PC-3 (cell line): ENCODE measurements at regions of chr17 and their contacts with region 1.

Region 1: GRCh38 chr17:64129764-64130558 is at the start of gene ERN1:
- DNase-seq: peak; percentile 91
- ATAC-seq: peak; percentile 88
- H3K4me3 ChIP-seq: peak within 1 kb of the TSS; percentile 92
- H3K27ac ChIP-seq: peak within 1 kb of the TSS; percentile 47
- H3K4me1 ChIP-seq: peaks cover 24% of the 10 kb centered on the region
- H3K27me3 ChIP-seq: no peaks in the 10 kb centered on the region
- CTCF ChIP-seq: no peak
- total RNA-seq, gene ERN1: 13.5 and 17.9 TPM in 2 replicates

Region 2: DNA sequence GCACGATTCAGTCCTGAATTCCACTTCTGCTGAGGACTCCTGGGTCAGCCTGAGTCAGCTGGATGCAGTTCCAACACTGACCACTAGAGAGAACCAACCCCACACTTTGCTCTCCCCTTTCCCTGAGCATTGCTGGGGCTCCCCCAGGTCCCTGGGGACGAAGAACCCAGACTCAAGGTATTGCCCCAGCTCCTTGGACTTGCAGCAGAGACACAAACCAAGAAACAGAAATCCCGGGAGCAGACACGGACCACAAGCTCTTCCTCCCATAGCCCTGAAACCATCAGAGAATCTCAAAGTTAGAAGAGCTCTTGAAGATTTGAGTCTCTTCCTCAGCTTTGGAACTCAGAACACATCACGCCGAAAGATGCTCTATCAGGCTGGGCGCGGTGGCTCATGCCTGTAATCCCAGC is 210.6 kb before region 1 on chr17:
- CTCF ChIA-PET with region 1: interaction called, 33 read pairs
- POLR2A ChIA-PET with region 1: no interaction called
- intact Hi-C with region 1: loop called (anchors 1 kb)
- DNase-seq: peak; percentile 76
- ATAC-seq: peak; percentile 95
- H3K4me3 ChIP-seq: no peak overlapping the region
- H3K27ac ChIP-seq: no peak overlapping the region
- H3K4me1 ChIP-seq: no peaks in the 10 kb centered on the region
- H3K27me3 ChIP-seq: peaks cover 14% of the 10 kb centered on the region; the same call in 1 of the 2 replicates
- CTCF ChIP-seq: peak; percentile 91

Region 3: DNA sequence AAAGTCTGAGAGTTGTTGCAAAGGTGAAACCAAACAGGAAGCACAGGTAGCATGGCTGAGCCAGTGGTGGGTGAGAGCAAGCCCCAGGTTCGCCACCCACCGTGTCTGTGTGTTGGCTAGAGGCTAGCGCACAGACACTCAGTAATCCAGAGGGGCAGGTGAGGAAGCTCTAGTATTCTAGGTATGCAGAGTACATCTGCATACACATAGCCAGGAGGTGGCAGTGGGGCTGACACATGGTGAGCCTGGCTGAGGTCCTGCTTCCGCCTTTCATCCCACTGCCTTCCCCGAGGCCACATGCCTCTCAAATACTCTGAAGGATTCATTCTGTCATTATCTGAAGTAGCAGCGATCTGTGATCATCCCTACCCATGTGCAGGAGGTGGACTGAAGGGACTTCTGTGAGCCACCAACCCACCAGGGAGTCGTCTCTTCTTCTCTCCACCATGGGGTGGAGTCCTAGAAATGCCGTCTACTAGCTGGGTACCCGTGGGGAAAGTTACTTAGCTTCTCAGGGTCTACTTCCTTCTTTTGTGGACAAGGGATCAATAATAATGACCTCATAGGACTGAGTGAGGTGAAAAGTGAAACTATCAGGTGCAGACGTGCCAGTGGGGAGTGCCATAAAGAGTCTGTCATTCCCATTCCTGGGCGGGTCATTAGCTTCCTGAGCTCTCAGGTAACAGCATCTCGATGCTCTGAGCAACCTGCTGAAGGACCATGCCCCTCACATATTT is 73.5 kb before region 1 on chr17:
- CTCF ChIA-PET with region 1: interaction called, 15 read pairs
- POLR2A ChIA-PET with region 1: interaction called, 6 read pairs
- intact Hi-C with region 1: no loop called
- DNase-seq: peak; percentile 49
- ATAC-seq: peak; percentile 9; the same call in 1 of the 2 replicates
- H3K4me3 ChIP-seq: no peak overlapping the region
- H3K27ac ChIP-seq: no peak overlapping the region; the same call in 1 of the 2 replicates
- H3K4me1 ChIP-seq: peaks cover 40% of the 10 kb centered on the region
- H3K27me3 ChIP-seq: no peaks in the 10 kb centered on the region
- CTCF ChIP-seq: 0 out of 2 replicates have a peak, but pooled peaks have one; percentile 23

Region 4: DNA sequence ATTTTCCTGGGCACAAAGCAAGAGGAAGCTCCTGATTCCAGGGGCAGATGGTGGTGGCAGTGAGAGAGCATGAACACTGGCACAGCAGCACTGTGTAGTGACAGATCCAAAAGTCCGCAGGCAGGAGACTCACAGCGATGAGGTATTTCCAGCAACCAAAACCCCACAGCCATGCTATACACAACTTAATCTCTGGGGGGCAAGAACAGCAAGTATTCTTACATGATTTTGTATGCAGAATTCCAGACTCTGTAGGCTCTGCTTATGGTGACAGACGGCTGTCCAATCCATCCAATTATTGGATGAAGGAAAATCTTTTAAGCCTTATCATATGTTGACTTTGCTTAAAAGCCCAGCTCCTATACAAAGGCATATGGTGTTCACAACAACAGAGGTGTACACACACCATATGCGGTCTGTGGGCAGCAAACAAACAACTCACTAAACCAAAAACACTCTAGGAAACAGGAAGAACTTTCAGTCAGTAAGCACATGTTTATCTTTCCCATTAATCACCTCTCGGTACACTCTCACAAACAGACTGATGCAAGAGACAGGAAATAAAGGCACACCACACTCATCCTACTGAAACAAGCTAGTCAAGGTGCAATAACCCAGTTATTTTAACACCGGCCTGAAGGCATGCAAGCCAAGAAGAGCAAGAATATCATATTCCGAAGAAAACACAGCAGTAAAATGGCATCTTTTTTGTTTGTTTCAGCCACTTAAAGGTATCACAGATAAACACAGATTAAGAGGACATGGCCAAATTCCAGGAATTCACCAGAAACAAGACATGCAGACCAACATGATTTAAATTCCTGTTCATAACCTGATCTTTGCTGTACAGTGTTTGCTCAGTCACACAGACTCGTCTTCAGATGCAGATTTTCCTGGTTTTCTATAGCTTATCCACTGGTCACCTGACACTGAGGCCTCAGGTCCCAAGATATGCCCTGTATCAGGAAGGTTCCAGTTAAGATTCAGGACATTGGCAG is 47.9 kb before region 1 on chr17:
- CTCF ChIA-PET with region 1: interaction called, 14 read pairs
- POLR2A ChIA-PET with region 1: interaction called, 10 read pairs
- intact Hi-C with region 1: loop called (anchors 1 kb)
- DNase-seq: peak; percentile 98
- ATAC-seq: peak; percentile 82
- H3K4me3 ChIP-seq: peak overlapping the region; percentile 44
- H3K27ac ChIP-seq: peak overlapping the region; percentile 95
- H3K4me1 ChIP-seq: peaks cover 62% of the 10 kb centered on the region
- H3K27me3 ChIP-seq: no peaks in the 10 kb centered on the region
- CTCF ChIP-seq: peak; percentile 41

Region 5: GRCh38 chr17:64145757-64146417 is 15.9 kb after region 1 on chr17:
- CTCF ChIA-PET with region 1: interaction called, 26 read pairs
- POLR2A ChIA-PET with region 1: no interaction called
- intact Hi-C with region 1: no loop called
- DNase-seq: peak; percentile 100
- ATAC-seq: peak; percentile 88
- H3K4me3 ChIP-seq: peak overlapping the region; percentile 81
- H3K27ac ChIP-seq: peak overlapping the region; percentile 79
- H3K4me1 ChIP-seq: peaks cover 15% of the 10 kb centered on the region
- H3K27me3 ChIP-seq: no peaks in the 10 kb centered on the region
- CTCF ChIP-seq: no peak

Region 6: DNA sequence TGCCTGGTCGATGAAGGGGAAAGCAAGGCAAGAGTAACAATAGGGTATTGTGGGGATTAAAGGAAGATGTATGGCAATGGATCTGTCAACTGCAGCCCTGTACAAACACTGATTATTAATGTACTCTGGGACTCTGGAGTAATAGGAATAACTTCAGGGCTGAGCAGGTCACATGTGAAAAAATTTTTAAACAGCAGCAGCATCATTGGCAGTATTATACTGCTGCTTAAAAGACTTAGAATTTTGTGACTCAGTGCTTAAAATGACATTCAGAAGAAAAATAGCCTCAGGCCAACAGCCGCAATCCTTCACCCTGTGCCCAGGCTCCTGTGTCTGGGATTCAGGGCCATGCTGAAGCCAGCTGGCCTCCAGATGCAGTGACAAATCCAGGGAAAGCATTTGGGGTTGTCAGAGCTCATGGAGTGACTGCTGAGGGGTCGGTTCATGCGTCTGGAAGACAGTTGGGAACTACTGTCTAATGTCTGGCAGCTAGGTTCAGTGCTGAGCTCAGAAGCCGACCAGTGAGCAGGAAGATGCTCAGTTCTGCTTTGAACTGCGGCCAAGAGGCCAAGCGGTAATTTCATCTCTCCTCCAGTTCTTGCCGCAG is 110.9 kb after region 1 on chr17:
- CTCF ChIA-PET with region 1: no interaction called
- POLR2A ChIA-PET with region 1: no interaction called
- intact Hi-C with region 1: no loop called
- DNase-seq: peak; percentile 43
- ATAC-seq: no peak
- H3K4me3 ChIP-seq: no peak overlapping the region
- H3K27ac ChIP-seq: no peak overlapping the region
- H3K4me1 ChIP-seq: peaks cover 23% of the 10 kb centered on the region
- H3K27me3 ChIP-seq: no peaks in the 10 kb centered on the region
- CTCF ChIP-seq: no peak